ENCODE measurements at regions of chr12 and their contacts with region 1.

Region 1: DNA sequence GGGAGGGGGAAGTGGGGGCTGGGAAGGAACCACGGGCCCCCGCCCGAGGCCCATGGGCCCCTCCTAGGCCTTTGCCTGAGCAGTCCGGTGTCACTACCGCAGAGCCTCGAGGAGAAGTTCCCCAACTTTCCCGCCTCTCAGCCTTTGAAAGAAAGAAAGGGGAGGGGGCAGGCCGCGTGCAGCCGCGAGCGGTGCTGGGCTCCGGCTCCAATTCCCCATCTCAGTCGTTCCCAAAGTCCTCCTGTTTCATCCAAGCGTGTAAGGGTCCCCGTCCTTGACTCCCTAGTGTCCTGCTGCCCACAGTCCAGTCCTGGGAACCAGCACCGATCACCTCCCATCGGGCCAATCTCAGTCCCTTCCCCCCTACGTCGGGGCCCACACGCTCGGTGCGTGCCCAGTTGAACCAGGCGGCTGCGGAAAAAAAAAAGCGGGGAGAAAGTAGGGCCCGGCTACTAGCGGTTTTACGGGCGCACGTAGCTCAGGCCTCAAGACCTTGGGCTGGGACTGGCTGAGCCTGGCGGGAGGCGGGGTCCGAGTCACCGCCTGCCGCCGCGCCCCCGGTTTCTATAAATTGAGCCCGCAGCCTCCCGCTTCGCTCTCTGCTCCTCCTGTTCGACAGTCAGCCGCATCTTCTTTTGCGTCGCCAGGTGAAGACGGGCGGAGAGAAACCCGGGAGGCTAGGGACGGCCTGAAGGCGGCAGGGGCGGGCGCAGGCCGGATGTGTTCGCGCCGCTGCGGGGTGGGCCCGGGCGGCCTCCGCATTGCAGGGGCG is at the start of gene GAPDH:
- DNase-seq: peak; percentile 98 to 99
- H3K4me3 ChIP-seq: peak within 1 kb of the TSS; percentile 93
- H3K4me3 Mint-ChIP-seq: peak within 1 kb of the TSS; percentile 91
- H3K27ac Mint-ChIP-seq: peak within 1 kb of the TSS; percentile 97
- H3K4me1 ChIP-seq: peaks cover 36% of the 10 kb centered on the region
- H3K4me1 Mint-ChIP-seq: peaks cover 46% of the 10 kb centered on the region
- H3K27me3 ChIP-seq: no peaks in the 10 kb centered on the region
- H3K27me3 Mint-ChIP-seq: no peaks in the 10 kb centered on the region
- CTCF ChIP-seq: no peak
- total RNA-seq, gene GAPDH: 4,975 and 5,337 TPM in 2 replicates

Region 2: GRCh38 chr12:6335451-6336078 is 198.5 kb before region 1 on chr12:
- CTCF ChIA-PET with region 1: interaction called, 11 read pairs
- POLR2A ChIA-PET with region 1: interaction called, 50 read pairs
- intact Hi-C with region 1: no loop called
- DNase-seq: peak; percentile 64 to 66
- H3K4me3 ChIP-seq: peak overlapping the region; percentile 15; the same call in 1 of the 2 replicates
- H3K4me3 Mint-ChIP-seq: no peak overlapping the region
- H3K27ac Mint-ChIP-seq: no peak overlapping the region
- H3K4me1 ChIP-seq: peaks cover 48% of the 10 kb centered on the region
- H3K4me1 Mint-ChIP-seq: peaks cover 7% of the 10 kb centered on the region
- H3K27me3 ChIP-seq: no peaks in the 10 kb centered on the region
- H3K27me3 Mint-ChIP-seq: no peaks in the 10 kb centered on the region
- CTCF ChIP-seq: peak in 1 of 2 experiments; percentile 56

Region 3: DNA sequence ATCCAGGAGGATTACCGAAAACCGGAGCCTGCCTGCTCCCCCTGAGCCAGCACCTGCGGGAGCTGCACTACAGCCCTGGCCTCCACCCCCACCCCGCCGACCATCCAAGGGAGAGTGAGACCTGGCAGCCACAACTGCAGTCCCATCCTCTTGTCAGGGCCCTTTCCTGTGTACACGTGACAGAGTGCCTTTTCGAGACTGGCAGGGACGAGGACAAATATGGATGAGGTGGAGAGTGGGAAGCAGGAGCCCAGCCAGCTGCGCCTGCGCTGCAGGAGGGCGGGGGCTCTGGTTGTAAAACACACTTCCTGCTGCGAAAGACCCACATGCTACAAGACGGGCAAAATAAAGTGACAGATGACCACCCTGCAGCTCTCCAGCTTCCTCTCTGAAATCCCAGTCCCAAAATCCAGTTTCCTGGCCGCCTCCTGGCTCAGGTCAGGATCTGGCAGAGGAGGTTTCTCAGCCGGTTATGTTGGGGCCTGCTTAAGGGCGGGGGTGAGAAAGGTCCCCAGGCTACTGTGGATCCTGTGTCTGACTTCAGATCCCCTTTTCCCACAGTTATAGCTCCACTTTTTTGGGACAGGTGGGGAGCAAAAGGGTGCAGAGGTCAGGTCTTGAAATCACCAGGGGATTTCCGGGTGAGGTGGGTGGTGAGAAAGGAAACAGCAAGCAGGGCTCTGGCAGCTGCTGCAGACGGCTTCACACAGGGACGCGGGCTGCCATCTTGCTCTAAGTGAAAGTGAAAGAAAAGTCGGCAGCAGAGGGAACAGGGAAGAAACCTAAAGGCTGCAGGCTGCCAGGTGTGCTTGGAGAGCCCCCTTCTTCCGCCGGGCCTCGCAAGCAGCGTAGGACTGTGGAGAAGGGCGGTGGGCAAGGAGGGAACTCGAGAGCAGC is 82.5 kb before region 1 on chr12 and contains the start of gene TAPBPL:
- CTCF ChIA-PET with region 1: interaction called, 12 read pairs
- POLR2A ChIA-PET with region 1: interaction called, 9 read pairs
- intact Hi-C with region 1: no loop called
- DNase-seq: peak; percentile 88 to 89
- H3K4me3 ChIP-seq: peak within 1 kb of the TSS; percentile 82
- H3K4me3 Mint-ChIP-seq: peak within 1 kb of the TSS; percentile 79
- H3K27ac Mint-ChIP-seq: peak within 1 kb of the TSS; percentile 93
- H3K4me1 ChIP-seq: peaks cover 9% of the 10 kb centered on the region; the same call in 1 of the 2 replicates
- H3K4me1 Mint-ChIP-seq: peaks cover 4% of the 10 kb centered on the region
- H3K27me3 ChIP-seq: no peaks in the 10 kb centered on the region
- H3K27me3 Mint-ChIP-seq: no peaks in the 10 kb centered on the region
- CTCF ChIP-seq: no peak
- total RNA-seq, gene TAPBPL: 9.1 and 9.7 TPM in 2 replicates

Region 4: DNA sequence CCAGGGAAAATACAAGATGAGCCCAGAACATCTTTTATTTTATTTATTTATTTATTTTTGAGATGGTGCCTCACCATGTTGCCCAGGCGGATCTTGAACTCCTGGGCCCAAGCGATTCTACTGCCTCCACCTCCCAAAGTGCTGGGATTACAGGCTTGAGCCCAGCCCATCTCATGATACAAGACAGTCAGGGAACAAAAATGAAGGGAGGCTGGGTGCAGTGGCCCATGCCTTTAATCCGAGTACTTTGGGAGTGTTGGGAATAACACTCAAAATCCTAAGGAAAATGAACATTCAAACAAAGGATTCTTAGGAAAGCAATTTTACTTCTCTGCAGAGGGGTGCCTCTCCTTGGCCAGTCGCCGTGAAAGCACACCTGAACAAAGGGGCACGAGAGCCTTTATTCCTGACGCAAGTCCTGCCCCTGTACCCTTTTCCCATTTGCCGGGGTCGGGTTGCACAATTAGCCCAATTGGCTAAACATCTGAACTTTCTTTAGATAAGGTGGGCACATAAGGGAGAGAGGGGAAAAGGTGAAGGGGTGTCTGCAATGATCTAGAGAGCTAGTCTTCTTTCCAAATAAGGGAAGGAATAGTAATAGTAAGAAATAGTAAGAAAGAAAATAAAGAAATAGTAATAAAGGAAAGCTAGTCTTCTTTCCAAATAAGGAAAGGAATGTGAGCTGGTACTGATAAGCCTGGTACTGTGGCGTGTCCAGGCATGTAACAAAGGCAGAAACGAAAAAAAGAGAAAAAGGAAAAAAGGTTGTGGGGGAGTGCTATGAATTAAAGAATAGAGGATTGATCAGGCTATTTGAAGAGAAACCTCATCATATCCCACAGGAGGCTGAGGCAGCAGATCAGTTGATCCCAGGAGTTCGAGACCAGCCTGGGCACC is 26.8 kb before region 1 on chr12:
- CTCF ChIA-PET with region 1: interaction called, 7 read pairs
- POLR2A ChIA-PET with region 1: interaction called, 24 read pairs
- intact Hi-C with region 1: no loop called
- DNase-seq: peak; percentile 58 to 59
- H3K4me3 ChIP-seq: no peak overlapping the region
- H3K4me3 Mint-ChIP-seq: peak overlapping the region; percentile 4
- H3K27ac Mint-ChIP-seq: peak overlapping the region; percentile 75
- H3K4me1 ChIP-seq: peaks cover 18% of the 10 kb centered on the region
- H3K4me1 Mint-ChIP-seq: peaks cover 12% of the 10 kb centered on the region
- H3K27me3 ChIP-seq: no peaks in the 10 kb centered on the region
- H3K27me3 Mint-ChIP-seq: no peaks in the 10 kb centered on the region
- CTCF ChIP-seq: no peak

Region 5: GRCh38 chr12:6607751-6608591 is 73.9 kb after region 1 on chr12:
- CTCF ChIA-PET with region 1: no interaction called
- POLR2A ChIA-PET with region 1: interaction called, 24 read pairs
- intact Hi-C with region 1: no loop called
- DNase-seq: peak; percentile 76 to 87
- H3K4me3 ChIP-seq: peak overlapping the region; percentile 86
- H3K4me3 Mint-ChIP-seq: no peak overlapping the region
- H3K27ac Mint-ChIP-seq: no peak overlapping the region
- H3K4me1 ChIP-seq: peaks cover 38% of the 10 kb centered on the region
- H3K4me1 Mint-ChIP-seq: peaks cover 20% of the 10 kb centered on the region
- H3K27me3 ChIP-seq: no peaks in the 10 kb centered on the region
- H3K27me3 Mint-ChIP-seq: no peaks in the 10 kb centered on the region
- CTCF ChIP-seq: no peak

Region 6: GRCh38 chr12:6752921-6753771 is 219.0 kb after region 1 on chr12 and contains the start of gene MLF2:
- CTCF ChIA-PET with region 1: no interaction called
- POLR2A ChIA-PET with region 1: interaction called, 20 read pairs
- intact Hi-C with region 1: no loop called
- DNase-seq: peak; percentile 99 to 100
- H3K4me3 ChIP-seq: peak within 1 kb of the TSS; percentile 97
- H3K4me3 Mint-ChIP-seq: peak within 1 kb of the TSS; percentile 90
- H3K27ac Mint-ChIP-seq: peak within 1 kb of the TSS; percentile 94
- H3K4me1 ChIP-seq: peaks cover 16% of the 10 kb centered on the region
- H3K4me1 Mint-ChIP-seq: peaks cover 11% of the 10 kb centered on the region
- H3K27me3 ChIP-seq: no peaks in the 10 kb centered on the region
- H3K27me3 Mint-ChIP-seq: no peaks in the 10 kb centered on the region
- CTCF ChIP-seq: peak; percentile 99
- total RNA-seq, gene MLF2: 303 and 309 TPM in 2 replicates

Region 7: GRCh38 chr12:6927379-6928024 is 393.4 kb after region 1 on chr12 and contains the start of gene ATN1:
- CTCF ChIA-PET with region 1: no interaction called
- POLR2A ChIA-PET with region 1: no interaction called
- intact Hi-C with region 1: no loop called
- DNase-seq: peak; percentile 85 to 87
- H3K4me3 ChIP-seq: peak within 1 kb of the TSS; percentile 91
- H3K4me3 Mint-ChIP-seq: peak within 1 kb of the TSS; percentile 85
- H3K27ac Mint-ChIP-seq: peak within 1 kb of the TSS; percentile 76
- H3K4me1 ChIP-seq: peaks cover 43% of the 10 kb centered on the region
- H3K4me1 Mint-ChIP-seq: peaks cover 66% of the 10 kb centered on the region
- H3K27me3 ChIP-seq: no peaks in the 10 kb centered on the region
- H3K27me3 Mint-ChIP-seq: no peaks in the 10 kb centered on the region
- CTCF ChIP-seq: no peak
- total RNA-seq, gene ATN1: 126 TPM in 2 replicates